ENCODE measurements at regions of chr5 and their contacts with region 1.

Region 1: GRCh38 chr5:134738133-134738962 is at the start of gene CAMLG:
- DNase-seq: peak; percentile 97
- H3K4me3 Mint-ChIP-seq: peak within 1 kb of the TSS; percentile 91
- H3K27ac Mint-ChIP-seq: peak within 1 kb of the TSS; percentile 87
- H3K4me1 Mint-ChIP-seq: peaks cover 16% of the 10 kb centered on the region
- H3K27me3 Mint-ChIP-seq: no peaks in the 10 kb centered on the region
- total RNA-seq, gene CAMLG: 28.1 and 29.1 TPM in 2 replicates

Region 2: DNA sequence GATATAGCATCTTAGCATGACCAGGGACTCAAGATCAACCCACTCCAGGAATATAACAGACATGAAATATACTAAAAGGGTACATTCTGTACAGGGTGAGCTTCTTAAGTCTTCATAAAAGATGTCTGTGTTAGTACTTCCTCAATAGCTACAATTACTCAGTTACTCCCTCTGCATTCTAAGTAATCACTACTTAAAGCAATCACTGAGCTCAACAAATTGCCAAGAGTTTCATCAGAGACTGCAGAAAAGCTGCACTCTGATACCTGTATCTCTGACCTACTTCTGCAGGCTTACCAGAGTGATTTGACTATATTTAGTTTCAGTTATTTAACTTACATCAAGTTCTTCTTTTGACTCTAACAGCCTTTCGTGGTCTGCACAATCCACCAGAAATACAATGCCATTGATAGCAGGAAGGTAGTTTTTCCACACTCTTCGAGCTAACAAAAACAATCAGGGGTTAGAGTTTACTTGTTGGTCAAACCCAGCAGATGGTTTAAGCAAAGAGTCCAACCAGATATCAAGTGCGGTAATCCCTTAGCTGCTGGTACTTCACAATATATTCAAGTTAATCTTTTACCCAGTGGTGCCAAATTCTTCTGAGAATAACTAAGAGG is 129.0 kb before region 1 on chr5:
- intact Hi-C with region 1: loop called (anchors 2 kb)
- DNase-seq: no peak
- H3K4me3 Mint-ChIP-seq: peak overlapping the region; percentile 22
- H3K27ac Mint-ChIP-seq: peak overlapping the region; percentile 84
- H3K4me1 Mint-ChIP-seq: peaks cover 45% of the 10 kb centered on the region
- H3K27me3 Mint-ChIP-seq: no peaks in the 10 kb centered on the region

Region 3: DNA sequence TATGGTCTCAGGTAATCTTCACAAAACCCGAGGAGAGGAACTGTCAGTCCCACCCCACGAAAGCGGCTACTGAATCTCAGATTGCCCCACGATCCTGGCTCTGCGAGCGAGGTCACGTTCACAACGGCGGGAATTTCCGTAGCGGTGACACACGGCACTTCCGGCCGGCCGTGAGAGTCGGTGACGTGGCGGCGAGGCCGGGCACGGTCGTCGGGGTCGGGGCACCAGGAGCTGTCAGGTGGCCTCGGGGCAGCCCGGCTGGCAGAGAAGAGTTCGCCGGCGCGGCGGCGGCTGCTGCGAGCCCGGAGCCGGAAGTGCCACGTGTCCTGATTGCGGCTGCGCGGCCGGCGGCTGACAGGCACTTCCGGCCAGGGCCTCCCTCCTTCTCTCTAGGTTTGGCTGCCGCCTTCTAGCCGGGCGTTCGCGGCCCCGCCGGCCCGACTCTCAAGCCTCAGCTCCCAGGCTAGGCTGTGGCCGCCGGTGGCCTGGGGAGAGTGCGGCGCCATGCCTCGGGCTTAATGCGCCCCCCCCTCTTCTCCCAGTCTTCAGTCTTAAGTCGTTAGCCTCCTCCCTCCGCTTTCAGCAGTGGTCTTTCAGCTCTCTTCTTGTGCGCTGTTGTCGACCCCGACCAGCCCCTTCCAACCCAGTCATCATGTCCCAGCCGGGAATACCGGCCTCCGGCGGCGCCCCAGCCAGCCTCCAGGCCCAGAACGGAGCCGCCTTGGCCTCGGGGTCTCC is 89.8 kb before region 1 on chr5 and contains the start of gene SEC24A:
- intact Hi-C with region 1: loop called (anchors 2 kb)
- DNase-seq: peak; percentile 88
- H3K4me3 Mint-ChIP-seq: peak within 1 kb of the TSS; percentile 88
- H3K27ac Mint-ChIP-seq: peak within 1 kb of the TSS; percentile 97
- H3K4me1 Mint-ChIP-seq: peaks cover 22% of the 10 kb centered on the region
- H3K27me3 Mint-ChIP-seq: no peaks in the 10 kb centered on the region
- total RNA-seq, gene SEC24A: 33.9 and 34.0 TPM in 2 replicates

Region 4: DNA sequence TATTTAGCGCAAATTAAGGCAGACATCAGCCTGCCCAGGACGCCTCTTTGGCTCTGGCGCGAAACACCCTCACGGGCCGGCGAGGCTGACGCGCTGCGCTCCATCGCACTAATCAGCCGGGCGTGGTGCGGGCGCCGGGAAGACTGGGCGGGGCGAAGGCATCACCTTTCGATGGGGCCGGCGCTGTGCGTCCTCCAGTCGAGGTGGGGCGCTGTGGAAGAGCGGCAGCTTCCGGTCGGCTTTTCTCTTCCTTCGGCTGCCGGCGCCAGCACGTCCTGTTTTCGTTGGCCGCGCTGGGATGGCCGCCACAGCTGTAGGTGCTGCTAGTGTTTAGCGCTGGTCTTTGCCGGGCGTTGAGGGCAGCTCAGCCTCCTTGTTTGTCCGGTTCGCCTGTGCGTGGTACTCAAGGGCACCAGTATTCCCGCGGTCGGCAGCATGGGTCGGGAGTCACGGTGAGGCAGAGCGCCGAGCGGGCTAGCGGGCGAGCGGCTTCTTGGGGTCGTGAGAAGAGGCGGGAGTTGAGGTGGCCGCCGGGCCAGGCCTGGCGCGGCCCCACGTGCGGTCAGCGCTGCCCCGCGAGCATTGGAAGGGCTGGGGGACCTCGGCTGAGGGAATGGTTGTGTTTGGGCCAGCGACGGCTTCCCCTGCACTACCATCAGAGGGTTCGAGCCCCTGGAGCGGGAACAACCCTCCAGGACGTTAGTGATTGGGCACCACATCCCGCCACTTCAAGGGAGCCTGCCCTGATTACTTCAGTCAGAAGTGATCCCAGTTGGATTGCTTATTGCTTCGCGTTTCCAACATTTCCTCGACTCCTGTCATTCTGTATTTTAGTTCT is 20.4 kb after region 1 on chr5 and contains the start of gene DDX46:
- intact Hi-C with region 1: loop called (anchors 1 kb)
- DNase-seq: peak; percentile 94
- H3K4me3 Mint-ChIP-seq: peak within 1 kb of the TSS; percentile 100
- H3K27ac Mint-ChIP-seq: peak within 1 kb of the TSS; percentile 97
- H3K4me1 Mint-ChIP-seq: peaks cover 24% of the 10 kb centered on the region
- H3K27me3 Mint-ChIP-seq: no peaks in the 10 kb centered on the region
- total RNA-seq, gene DDX46: 75.2 and 83.9 TPM in 2 replicates

Region 5: DNA sequence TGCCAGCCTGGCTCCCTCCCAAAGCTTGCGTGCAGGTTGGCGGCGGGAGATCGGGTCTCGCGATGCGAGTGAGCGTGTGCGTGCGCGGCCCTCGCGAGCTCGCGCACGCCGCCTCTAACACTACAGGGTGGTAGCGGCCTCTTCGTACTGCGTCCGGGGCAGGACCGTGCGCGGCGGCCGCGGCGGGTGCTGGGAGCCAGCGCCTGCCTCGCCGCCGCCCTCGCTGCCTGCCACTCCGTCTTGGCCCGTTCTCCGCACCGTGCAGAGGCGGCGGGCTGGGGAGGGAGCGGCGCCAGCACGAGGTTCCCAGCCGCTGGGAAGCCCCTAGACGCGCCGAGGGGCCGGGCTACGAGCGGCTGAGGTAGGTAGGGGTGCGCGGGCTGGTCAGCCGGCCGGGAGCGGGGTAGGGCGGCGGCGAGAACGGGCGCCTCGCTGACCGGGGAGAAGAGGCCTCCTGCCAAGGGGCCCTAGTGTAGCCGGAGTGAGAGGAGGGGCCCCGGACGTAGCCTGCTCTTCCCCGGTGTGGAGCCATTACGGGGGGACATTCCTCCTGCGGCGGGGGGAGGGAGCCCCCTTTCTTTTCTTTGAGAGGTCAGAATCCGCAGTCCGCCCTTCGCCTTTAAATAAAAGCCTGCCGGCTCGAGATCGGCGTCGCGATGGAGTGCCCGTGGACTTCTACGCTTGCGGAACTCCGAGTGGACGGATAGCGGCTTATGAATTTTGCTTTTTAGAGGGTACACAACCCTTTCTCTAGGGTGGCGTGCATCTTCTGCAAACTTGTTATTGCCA is 107.7 kb after region 1 on chr5 and contains the start of gene C5orf24:
- intact Hi-C with region 1: loop called (anchors 1 kb)
- DNase-seq: peak; percentile 91
- H3K4me3 Mint-ChIP-seq: peak within 1 kb of the TSS; percentile 94
- H3K27ac Mint-ChIP-seq: peak within 1 kb of the TSS; percentile 97
- H3K4me1 Mint-ChIP-seq: peaks cover 22% of the 10 kb centered on the region
- H3K27me3 Mint-ChIP-seq: no peaks in the 10 kb centered on the region
- total RNA-seq, gene C5orf24: 36.0 and 40.5 TPM in 2 replicates

Region 6: DNA sequence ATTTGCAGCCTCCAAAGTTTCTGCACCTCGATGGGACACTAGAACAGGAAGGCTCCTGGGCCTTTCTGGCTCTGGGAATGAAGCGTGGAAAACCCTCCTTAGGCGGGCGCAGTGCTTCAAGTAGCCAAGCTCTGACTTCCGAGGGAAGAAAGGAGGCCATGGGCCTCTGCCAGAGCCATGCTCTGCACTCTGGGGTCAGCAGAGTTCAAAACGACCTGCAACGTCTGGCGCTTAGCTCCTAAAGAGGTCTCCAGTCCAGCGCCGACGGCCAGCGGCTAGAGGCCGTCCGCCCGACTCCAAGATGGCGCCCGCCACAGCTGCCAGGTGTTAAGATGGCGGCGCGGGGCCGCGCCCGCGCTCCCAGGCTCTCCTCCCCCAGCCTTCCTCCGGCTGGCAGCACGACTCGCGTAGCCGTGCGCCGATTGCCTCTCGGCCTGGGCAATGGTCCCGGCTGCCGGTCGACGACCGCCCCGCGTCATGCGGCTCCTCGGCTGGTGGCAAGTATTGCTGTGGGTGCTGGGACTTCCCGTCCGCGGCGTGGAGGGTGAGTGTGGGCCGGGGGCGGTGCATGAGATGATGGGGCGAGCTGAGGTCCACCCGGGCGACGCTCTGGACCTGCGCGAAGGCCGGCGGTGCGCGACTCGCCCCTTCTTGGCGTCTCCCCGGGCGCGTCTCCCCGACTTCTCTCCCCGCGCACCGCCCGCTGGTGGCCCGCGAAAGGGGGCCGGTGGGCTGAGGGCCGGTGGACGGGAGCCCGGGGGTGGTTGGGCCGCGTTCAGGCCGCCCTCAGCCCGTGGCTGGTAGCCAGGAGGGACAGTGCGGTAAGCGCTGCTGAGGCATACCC is 135.9 kb after region 1 on chr5 and contains the start of gene TXNDC15:
- intact Hi-C with region 1: loop called (anchors 1 kb)
- DNase-seq: peak; percentile 80
- H3K4me3 Mint-ChIP-seq: peak within 1 kb of the TSS; percentile 95
- H3K27ac Mint-ChIP-seq: peak within 1 kb of the TSS; percentile 96
- H3K4me1 Mint-ChIP-seq: peaks cover 28% of the 10 kb centered on the region
- H3K27me3 Mint-ChIP-seq: no peaks in the 10 kb centered on the region
- total RNA-seq, gene TXNDC15: 53.9 and 56.9 TPM in 2 replicates

Measured in activated T-helper 2 cell treated with anti-CD3 and anti-CD28 coated beads, Interferon-gamma antibody, Interleukin-2, Interleukin-4, amounts not matched to agents 10 μg/mL and 5 μg/mL and 100 μg/mL, durations not matched to agents 14 hours and 24 hours and 36 hours (primary cell).